ENCODE measurements at regions of chr18 and their contacts with region 1.

Region 1: DNA sequence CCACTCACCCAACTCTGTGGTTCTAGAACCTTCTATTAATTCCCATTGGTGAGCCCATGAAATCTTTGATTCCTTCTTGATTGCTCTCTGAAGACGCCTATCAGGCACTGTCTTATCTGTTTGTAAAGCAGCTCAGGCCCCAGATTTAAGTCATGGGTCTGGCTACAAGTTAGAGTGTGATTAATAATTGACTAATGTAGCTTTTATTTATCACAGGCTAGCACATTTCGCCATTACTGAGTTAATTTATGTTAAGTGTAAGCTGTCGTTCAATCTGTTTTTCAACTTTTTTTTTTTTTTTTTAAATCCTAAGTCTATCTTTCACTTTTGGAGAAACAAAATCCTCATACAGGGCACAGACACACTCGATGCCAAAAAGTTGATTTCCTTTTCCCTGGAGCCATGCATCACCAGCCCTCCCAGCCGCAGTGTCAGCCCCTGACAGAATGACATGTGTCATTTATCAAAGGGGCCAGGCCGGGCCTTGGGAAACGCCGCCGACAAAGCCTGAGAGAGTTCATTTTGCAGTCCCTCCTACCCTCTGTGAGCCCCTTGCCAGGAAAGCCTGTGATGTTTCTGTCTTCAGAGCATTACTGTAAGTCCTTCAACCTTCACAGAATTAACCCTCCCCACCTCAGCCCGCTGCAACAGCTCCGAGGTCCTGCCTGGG is 15.8 kb downstream of the TSHZ1 start:
- DNase-seq: no peak
- H3K4me3 ChIP-seq: no peak overlapping the region
- H3K4me3 Mint-ChIP-seq: no peak overlapping the region
- H3K27ac Mint-ChIP-seq: no peak overlapping the region
- H3K4me1 ChIP-seq: 0 out of 2 replicates have a peak, but pooled peaks cover 8% of the 10 kb centered on the region
- H3K4me1 Mint-ChIP-seq: peaks cover 6% of the 10 kb centered on the region
- H3K27me3 ChIP-seq: no peaks in the 10 kb centered on the region
- H3K27me3 Mint-ChIP-seq: no peaks in the 10 kb centered on the region
- CTCF ChIP-seq: no peak

Region 2: DNA sequence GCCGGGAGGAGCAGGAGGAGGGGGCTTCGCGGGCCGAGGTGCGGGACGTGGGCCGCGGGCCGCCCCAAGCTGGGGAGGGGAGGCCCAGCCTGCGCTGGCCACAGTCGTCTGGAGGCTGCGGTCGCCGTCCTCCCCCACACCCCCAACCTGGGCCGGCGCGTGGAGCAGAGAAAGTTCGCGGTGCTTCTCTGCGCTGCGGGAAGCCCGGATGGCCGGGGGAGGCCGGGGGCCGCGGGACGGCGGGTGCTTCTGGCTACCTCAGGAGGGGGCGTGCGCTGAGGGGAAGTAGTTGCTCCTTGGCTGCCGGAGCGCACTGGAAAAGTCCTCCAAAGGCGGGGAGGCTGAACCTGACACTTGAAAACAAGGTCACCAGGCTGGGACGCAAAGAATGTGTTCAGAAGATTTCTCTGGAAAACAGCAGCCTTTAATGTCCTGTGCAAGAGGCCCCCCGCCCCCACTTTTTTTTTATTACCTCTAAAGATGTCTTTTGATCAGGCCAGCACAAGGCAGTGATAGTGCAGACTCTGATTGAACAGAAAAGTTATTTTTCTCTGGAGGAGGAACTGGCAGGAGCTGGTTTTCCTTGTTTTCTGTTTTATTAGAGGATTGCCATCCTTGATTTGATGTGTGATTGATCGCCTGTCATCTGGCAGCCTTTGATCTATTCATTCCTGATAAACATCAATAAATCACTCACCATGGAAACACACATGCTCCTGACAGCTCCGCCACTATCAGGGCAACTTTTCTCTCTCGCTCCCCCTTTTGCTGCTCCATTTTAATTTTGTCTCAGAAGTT is 14.3 kb before region 1 on chr18:
- CTCF ChIA-PET with region 1: no interaction called
- POLR2A ChIA-PET with region 1: no interaction called
- intact Hi-C with region 1: loop called (anchors 1 kb)
- DNase-seq: peak; percentile 53 to 63
- H3K4me3 ChIP-seq: peak overlapping the region; percentile 52
- H3K4me3 Mint-ChIP-seq: peak overlapping the region; percentile 61
- H3K27ac Mint-ChIP-seq: no peak overlapping the region
- H3K4me1 ChIP-seq: peaks cover 8% of the 10 kb centered on the region; the same call in 1 of the 2 replicates
- H3K4me1 Mint-ChIP-seq: no peaks in the 10 kb centered on the region
- H3K27me3 ChIP-seq: no peaks in the 10 kb centered on the region
- H3K27me3 Mint-ChIP-seq: no peaks in the 10 kb centered on the region
- CTCF ChIP-seq: no peak

Region 3: GRCh38 chr18:75247611-75248421 is 21.4 kb after region 1 on chr18:
- CTCF ChIA-PET with region 1: no interaction called
- POLR2A ChIA-PET with region 1: no interaction called
- intact Hi-C with region 1: no loop called
- DNase-seq: no peak
- H3K4me3 ChIP-seq: no peak overlapping the region
- H3K4me3 Mint-ChIP-seq: no peak overlapping the region
- H3K27ac Mint-ChIP-seq: no peak overlapping the region
- H3K4me1 ChIP-seq: no peaks in the 10 kb centered on the region
- H3K4me1 Mint-ChIP-seq: no peaks in the 10 kb centered on the region
- H3K27me3 ChIP-seq: no peaks in the 10 kb centered on the region
- H3K27me3 Mint-ChIP-seq: no peaks in the 10 kb centered on the region
- CTCF ChIP-seq: no peak

Measured in Caco-2 (cell line).